ENCODE measurements at regions of chr9 and their contacts with region 1.

Region 1: GRCh38 chr9:23771746-23772384 is 54.2 kb downstream of the ELAVL2 start:
- DNase-seq: no peak
- ATAC-seq: no peak
- H3K4me3 ChIP-seq: no peak overlapping the region
- H3K4me3 Mint-ChIP-seq: no peak overlapping the region
- H3K27ac ChIP-seq: no peak overlapping the region
- H3K27ac Mint-ChIP-seq: no peak overlapping the region
- H3K4me1 ChIP-seq: no peaks in the 10 kb centered on the region
- H3K4me1 Mint-ChIP-seq: no peaks in the 10 kb centered on the region
- H3K27me3 ChIP-seq: no peaks in the 10 kb centered on the region
- H3K27me3 Mint-ChIP-seq: no peaks in the 10 kb centered on the region

Region 2: GRCh38 chr9:23254404-23255184 is 517.3 kb before region 1 on chr9:
- CTCF ChIA-PET with region 1: no interaction called
- POLR2A ChIA-PET with region 1: interaction called in 1 of 2 experiments, 11 read pairs
- DNase-seq: no peak
- ATAC-seq: no peak
- H3K4me3 ChIP-seq: no peak overlapping the region
- H3K4me3 Mint-ChIP-seq: no peak overlapping the region
- H3K27ac ChIP-seq: no peak overlapping the region
- H3K27ac Mint-ChIP-seq: no peak overlapping the region
- H3K4me1 ChIP-seq: no peaks in the 10 kb centered on the region
- H3K4me1 Mint-ChIP-seq: no peaks in the 10 kb centered on the region
- H3K27me3 ChIP-seq: no peaks in the 10 kb centered on the region
- H3K27me3 Mint-ChIP-seq: no peaks in the 10 kb centered on the region

Region 3: GRCh38 chr9:23754551-23754950 is 17.3 kb before region 1 on chr9:
- CTCF ChIA-PET with region 1: no interaction called
- POLR2A ChIA-PET with region 1: no interaction called
- DNase-seq: no peak
- ATAC-seq: no peak
- H3K4me3 ChIP-seq: no peak overlapping the region
- H3K4me3 Mint-ChIP-seq: no peak overlapping the region
- H3K27ac ChIP-seq: no peak overlapping the region
- H3K27ac Mint-ChIP-seq: no peak overlapping the region
- H3K4me1 ChIP-seq: no peaks in the 10 kb centered on the region
- H3K4me1 Mint-ChIP-seq: no peaks in the 10 kb centered on the region
- H3K27me3 ChIP-seq: no peaks in the 10 kb centered on the region
- H3K27me3 Mint-ChIP-seq: no peaks in the 10 kb centered on the region